SK-N-SH (cell line): ENCODE measurements at regions of chr6 and their contacts with region 1.

Region 1: DNA sequence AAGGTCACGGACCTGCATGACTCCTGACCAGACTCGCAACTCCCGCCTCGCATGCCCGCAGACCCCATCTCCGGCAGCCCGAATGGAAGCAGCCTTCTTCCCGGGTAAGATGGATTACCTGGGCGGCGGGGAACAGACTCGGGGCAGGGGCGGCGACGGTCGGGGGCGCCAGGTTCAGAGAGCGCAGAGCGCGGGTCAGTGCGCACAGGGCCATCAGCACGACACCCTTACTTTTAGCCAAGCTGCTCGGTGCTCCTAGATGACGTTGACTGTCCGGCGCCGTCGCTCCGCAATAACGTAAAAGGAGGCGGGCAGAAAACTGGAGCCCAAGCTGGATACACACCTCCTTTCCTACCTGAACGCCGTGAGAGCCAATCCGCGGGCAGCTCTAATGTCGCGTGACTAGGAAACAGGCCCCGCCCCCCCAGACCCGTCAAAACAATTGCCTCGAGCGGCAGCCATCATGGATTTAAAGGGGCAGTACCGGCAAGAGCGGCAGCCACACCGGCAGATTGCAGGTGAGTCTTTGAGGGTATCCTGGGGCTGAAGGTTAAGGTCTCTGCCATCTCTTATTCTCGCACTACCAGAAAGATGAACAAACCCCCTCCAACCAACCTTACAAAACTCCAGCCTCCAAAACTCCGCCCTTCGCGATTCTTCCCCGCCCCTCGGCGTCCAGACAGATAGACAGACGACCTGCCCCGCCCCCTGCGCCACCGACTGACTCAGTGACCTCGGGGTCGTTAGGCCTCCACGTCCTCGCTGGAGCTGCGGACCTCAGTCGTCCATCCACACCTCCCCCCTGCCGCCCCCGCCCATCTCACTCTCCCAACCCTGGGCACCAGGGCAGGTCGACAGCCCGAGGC is at the starts of genes KLC4 and MRPL2:
- DNase-seq: peak; percentile 98
- H3K4me3 ChIP-seq: peak within 1 kb of the TSS; percentile 90 to 92
- H3K27ac ChIP-seq: peak within 1 kb of the TSS; percentile 63 to 86
- H3K4me1 ChIP-seq: peaks cover 0 to 14% of the 10 kb centered on the region in 2 experiments; a peak in 3 of 4 replicates
- H3K27me3 ChIP-seq: no peaks in the 10 kb centered on the region
- CTCF ChIP-seq: no peak
- EP300 ChIP-seq: no peak
- RAD21 ChIP-seq: no peak
- polyA plus RNA-seq, gene KLC4: 17.5 and 22.0 TPM in 2 replicates
- polyA plus RNA-seq, gene MRPL2: 43.0 and 64.7 TPM in 2 replicates

Region 2: DNA sequence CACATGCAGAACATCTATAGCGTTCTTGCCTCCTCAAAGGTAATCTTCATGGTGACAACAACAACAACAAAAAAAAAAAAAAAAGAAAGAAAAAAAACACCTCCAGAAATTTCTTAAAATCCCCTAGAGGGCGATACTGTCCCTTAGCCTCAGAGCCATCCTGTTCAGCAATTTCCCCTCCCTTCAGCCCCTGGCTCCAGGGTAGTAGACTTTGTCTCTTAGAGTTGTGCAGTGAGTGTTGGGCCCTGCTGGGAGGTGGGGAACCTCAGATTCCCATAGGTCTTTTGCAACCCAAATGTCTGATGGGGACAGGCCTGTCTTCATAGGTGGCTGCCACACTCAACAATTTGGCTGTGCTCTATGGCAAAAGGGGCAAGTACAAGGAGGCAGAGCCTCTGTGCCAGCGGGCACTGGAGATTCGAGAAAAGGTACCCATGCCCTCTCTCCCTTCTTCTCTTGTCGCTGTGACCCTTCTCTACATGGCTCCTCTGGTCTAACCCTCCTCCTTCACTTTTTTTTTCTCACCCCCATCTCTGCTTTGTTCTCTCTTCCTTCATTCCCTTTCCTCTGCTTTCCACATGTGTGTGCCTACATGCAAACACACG is 10.7 kb after region 1 on chr6:
- CTCF ChIA-PET with region 1: interaction called, 14 read pairs
- POLR2A ChIA-PET with region 1: no interaction called
- DNase-seq: peak; percentile 80
- H3K4me3 ChIP-seq: no peak overlapping the region
- H3K27ac ChIP-seq: no peak overlapping the region
- H3K4me1 ChIP-seq: peaks cover 0 to 3% of the 10 kb centered on the region in 2 experiments; a peak in 1 of 4 replicates
- H3K27me3 ChIP-seq: no peaks in the 10 kb centered on the region
- CTCF ChIP-seq: peak; percentile 79
- EP300 ChIP-seq: no peak
- RAD21 ChIP-seq: peak; percentile 84

Region 3: GRCh38 chr6:43086022-43086658 is 26.7 kb after region 1 on chr6:
- CTCF ChIA-PET with region 1: no interaction called
- POLR2A ChIA-PET with region 1: no interaction called
- DNase-seq: no peak
- H3K4me3 ChIP-seq: no peak overlapping the region
- H3K27ac ChIP-seq: no peak overlapping the region
- H3K4me1 ChIP-seq: peaks cover 17 to 24% of the 10 kb centered on the region in 2 experiments; a peak in 3 of 4 replicates
- H3K27me3 ChIP-seq: no peaks in the 10 kb centered on the region
- CTCF ChIP-seq: no peak
- EP300 ChIP-seq: no peak
- RAD21 ChIP-seq: no peak

Region 4: GRCh38 chr6:43203029-43203717 is 143.8 kb after region 1 on chr6:
- CTCF ChIA-PET with region 1: no interaction called
- POLR2A ChIA-PET with region 1: no interaction called
- DNase-seq: no peak
- H3K4me3 ChIP-seq: no peak overlapping the region
- H3K27ac ChIP-seq: no peak overlapping the region
- H3K4me1 ChIP-seq: no peaks in the 10 kb centered on the region
- H3K27me3 ChIP-seq: no peaks in the 10 kb centered on the region
- CTCF ChIP-seq: no peak
- EP300 ChIP-seq: no peak
- RAD21 ChIP-seq: no peak

Region 5: GRCh38 chr6:43308101-43308989 is 248.9 kb after region 1 on chr6 and contains the start of gene CRIP3:
- CTCF ChIA-PET with region 1: no interaction called
- POLR2A ChIA-PET with region 1: no interaction called
- DNase-seq: no peak
- H3K4me3 ChIP-seq: no peak within 1 kb of the TSS
- H3K27ac ChIP-seq: no peak within 1 kb of the TSS
- H3K4me1 ChIP-seq: no peaks in the 10 kb centered on the region; a peak in 1 of 4 replicates
- H3K27me3 ChIP-seq: no peaks in the 10 kb centered on the region
- CTCF ChIP-seq: no peak
- EP300 ChIP-seq: no peak
- RAD21 ChIP-seq: no peak
- polyA plus RNA-seq, gene CRIP3: 0.11 TPM in 1 of 2 replicates, not detected in the other